Mammary epithelial cell (primary cell): ENCODE measurements at regions of chr19 and their contacts with region 1.

Region 1: GRCh38 chr19:50368649-50369570 is 3.5 kb upstream of the NAPSA start:
- DNase-seq: peak; percentile 73
- H3K4me3 ChIP-seq: peak overlapping the region; percentile 72 to 75 (median 74)
- H3K27ac ChIP-seq: peak overlapping the region; percentile 36
- H3K4me1 ChIP-seq: peaks cover 5% of the 10 kb centered on the region
- H3K27me3 ChIP-seq: no peaks in the 10 kb centered on the region
- CTCF ChIP-seq: peak; percentile 68 to 82

Region 2: GRCh38 chr19:50461066-50461875 is 92.4 kb after region 1 on chr19:
- CTCF ChIA-PET with region 1: interaction called, 6 read pairs
- dilution Hi-C with region 1: no loop called
- in situ Hi-C with region 1: loop called in 1 of 2 experiments (anchors 10 kb)
- intact Hi-C with region 1: loop called (anchors 1 kb)
- DNase-seq: peak; percentile 42
- H3K4me3 ChIP-seq: no peak overlapping the region
- H3K27ac ChIP-seq: no peak overlapping the region
- H3K4me1 ChIP-seq: no peaks in the 10 kb centered on the region
- H3K27me3 ChIP-seq: peaks cover 4% of the 10 kb centered on the region
- CTCF ChIP-seq: peak; percentile 86 to 90

Region 3: GRCh38 chr19:50511068-50511822 is 142.3 kb after region 1 on chr19 and contains the start of gene JOSD2:
- CTCF ChIA-PET with region 1: no interaction called
- dilution Hi-C with region 1: no loop called
- in situ Hi-C with region 1: no loop called
- intact Hi-C with region 1: loop called (anchors 5 kb)
- DNase-seq: peak; percentile 99
- H3K4me3 ChIP-seq: peak within 1 kb of the TSS; percentile 82 to 96 (median 94)
- H3K27ac ChIP-seq: peak within 1 kb of the TSS; percentile 79
- H3K4me1 ChIP-seq: peaks cover 12% of the 10 kb centered on the region
- H3K27me3 ChIP-seq: no peaks in the 10 kb centered on the region
- CTCF ChIP-seq: no peak
- total RNA-seq, gene JOSD2: 17.3 to 71.1 TPM

Region 4: DNA sequence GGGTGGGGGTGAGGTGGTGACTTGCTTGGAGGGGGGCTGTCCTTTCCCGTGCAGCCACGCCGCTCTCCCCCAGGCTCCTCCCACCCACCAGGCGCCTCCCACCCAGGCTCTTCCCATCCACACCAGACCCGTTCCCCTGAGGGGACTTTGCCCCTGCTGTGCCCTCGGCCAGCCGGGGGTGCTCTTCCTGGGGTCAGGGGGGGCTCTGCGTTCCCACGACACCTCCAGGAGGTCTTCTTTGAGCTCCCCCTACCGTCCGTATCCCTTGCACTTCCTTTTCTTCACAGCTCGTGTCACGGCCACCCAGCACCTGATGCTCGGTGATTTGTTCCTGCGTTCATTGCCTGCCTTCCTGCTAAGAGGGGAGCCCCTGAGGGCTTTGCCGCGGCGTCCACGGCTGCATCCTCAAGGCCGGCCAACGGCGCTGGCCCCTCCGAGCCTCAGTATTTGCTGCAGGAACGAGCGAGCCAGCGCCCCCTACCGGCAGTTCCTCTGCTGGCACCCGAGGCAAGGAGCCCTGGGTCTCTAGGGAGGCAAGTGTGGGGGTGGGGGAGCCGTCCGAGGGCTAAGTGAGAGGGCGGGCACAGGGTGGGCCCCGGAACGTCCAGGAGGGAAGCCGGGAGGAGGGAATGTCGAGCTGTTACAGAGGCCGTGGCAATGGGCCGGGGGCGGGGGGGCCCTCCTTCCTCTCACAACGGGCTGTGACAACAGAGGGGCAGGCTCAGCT is 187.5 kb after region 1 on chr19:
- CTCF ChIA-PET with region 1: interaction called, 14 read pairs
- dilution Hi-C with region 1: no loop called
- in situ Hi-C with region 1: no loop called
- intact Hi-C with region 1: loop called (anchors 2 kb)
- DNase-seq: peak; percentile 16
- H3K4me3 ChIP-seq: peak overlapping the region in 2 of 3 experiments; percentile 35
- H3K27ac ChIP-seq: no peak overlapping the region
- H3K4me1 ChIP-seq: peaks cover 4% of the 10 kb centered on the region
- H3K27me3 ChIP-seq: peaks cover 3% of the 10 kb centered on the region
- CTCF ChIP-seq: peak; percentile 66 to 78